Sciatic nerve (tissue), 2 donors: ENCODE measurements at regions of chr20 and their contacts with region 1.

Region 1: DNA sequence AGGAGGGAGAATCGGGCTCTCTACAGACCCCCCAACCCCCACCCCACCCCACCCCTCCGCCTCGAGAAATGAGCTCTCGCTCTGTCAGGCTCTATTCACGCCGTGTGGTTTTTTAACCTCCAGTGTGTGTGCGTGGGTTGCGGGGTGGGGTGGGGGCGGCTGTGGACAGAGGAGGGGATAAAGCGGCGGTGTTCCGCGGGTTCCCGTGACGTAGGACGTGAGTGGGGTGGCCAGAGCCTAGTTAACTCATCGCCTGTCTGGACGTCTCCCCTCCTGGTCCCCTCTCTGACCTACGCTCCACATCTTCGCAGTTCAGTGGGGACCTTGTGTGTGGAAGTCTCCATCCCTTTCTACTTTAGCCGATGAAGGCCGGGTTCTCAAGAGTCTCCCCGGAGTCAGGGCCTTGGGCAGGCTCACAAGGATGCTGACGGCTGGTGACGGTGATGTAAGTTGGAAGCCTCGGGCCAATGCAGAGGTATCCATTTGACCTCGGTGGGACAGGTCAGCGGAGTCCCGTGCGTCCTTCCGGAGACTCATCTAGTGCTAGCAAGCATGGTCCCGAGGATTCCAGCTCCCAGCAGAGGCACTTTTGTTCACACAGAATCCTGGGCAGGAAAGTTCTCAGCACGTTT is 1507.1 kb upstream of the DEFB115 start:
- DNase-seq: no peak
- ATAC-seq: no peak

Region 2: DNA sequence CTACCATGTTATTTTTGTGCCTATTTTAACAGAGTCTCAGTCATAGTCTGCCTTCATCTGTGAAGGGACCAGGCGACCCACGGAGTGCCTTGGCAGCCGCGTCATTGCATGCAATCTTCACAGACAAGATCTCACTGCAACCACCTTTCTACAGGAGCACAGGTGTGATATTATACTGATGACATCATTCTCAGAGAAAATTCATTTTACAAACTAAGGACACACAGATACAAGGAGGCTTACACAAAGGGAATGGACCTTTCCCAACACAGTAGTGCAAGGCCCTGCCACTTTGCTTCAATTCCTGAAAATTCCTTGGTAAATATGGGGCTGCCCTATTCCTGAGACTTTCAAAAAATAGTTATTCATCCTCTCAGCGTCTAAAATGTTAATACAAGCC is 632.2 kb before region 1 on chr20:
- intact Hi-C with region 1: no loop called
- DNase-seq: no peak
- ATAC-seq: no peak

Region 3: GRCh38 chr20:29298759-29299613 is 451.4 kb before region 1 on chr20:
- intact Hi-C with region 1: no loop called
- DNase-seq: no peak
- ATAC-seq: no peak

Region 4: GRCh38 chr20:29689411-29690241 is 60.8 kb before region 1 on chr20:
- intact Hi-C with region 1: loop called (anchors 10 kb)
- DNase-seq: peak; percentile 59
- ATAC-seq: no peak